Activated T-helper 1 cell treated with anti-CD3 and anti-CD28 coated beads, Interleukin-12 subunit alpha, Interleukin-12 subunit beta, Interleukin-2, Interleukin-4 antibody, amounts not matched to agents 30 ng/mL and 10 ng/mL and 1 ng/mL, durations not matched to agents 14 hours and 24 hours and 36 hours (primary cell): ENCODE measurements at regions of chr7 and their contacts with region 1.

Region 1: GRCh38 chr7:112939574-112940314 is 146.9 kb downstream of the GPR85 start:
- DNase-seq: peak; percentile 99
- H3K4me3 Mint-ChIP-seq: peak overlapping the region; percentile 91
- H3K27ac Mint-ChIP-seq: peak overlapping the region; percentile 95
- H3K4me1 Mint-ChIP-seq: peaks cover 39% of the 10 kb centered on the region
- H3K27me3 Mint-ChIP-seq: peaks cover 6% of the 10 kb centered on the region

Region 2: DNA sequence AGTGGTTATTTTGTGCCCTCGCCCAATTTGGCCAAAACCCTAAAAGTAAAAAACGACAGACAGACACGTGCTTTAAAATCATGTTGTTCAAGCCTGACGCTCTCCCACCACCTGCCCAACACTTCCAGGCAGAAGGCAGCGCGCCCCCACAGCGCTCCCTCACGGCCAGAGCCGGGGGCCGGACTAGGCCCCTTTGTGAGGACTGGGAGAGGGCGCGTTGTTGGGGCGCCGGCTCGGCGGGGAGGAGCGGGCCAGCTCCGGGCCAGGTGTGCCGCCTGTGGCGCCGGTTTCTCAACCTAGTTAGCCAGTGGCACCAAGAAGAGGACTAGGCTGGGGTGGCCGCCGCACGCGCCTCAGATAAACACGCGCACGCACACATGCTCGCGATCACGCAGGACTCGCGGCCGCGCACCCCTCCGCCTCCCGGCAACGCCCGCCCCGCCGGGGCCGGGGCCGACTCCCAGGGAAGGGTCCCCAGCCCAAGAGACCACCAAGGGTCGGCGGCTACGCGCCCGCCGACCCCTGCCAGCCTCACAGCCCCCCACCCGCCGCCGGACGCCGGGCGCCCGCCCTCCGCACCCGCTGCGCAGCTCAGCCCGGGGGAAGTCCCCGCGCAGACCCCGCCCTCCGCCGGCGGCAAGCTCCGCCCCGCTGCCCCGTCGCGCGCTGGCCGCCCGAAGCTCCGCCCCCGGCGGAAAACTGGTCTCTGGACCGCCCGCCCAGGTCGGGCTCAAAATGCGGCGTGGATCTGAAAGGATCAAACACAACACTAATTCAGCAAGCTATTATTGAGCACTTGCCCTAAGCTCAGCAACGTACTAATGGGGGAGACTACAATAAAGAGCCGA is 1377.6 kb before region 1 on chr7 and contains the start of gene IMMP2L:
- intact Hi-C with region 1: loop called (anchors 2 kb)
- DNase-seq: peak; percentile 89
- H3K4me3 Mint-ChIP-seq: peak within 1 kb of the TSS; percentile 87
- H3K27ac Mint-ChIP-seq: peak within 1 kb of the TSS; percentile 89
- H3K4me1 Mint-ChIP-seq: peaks cover 37% of the 10 kb centered on the region
- H3K27me3 Mint-ChIP-seq: no peaks in the 10 kb centered on the region
- total RNA-seq, gene IMMP2L: 11.3 and 16.0 TPM in 2 replicates

Region 3: GRCh38 chr7:113188396-113188795 is 248.7 kb after region 1 on chr7:
- intact Hi-C with region 1: no loop called
- DNase-seq: no peak
- H3K4me3 Mint-ChIP-seq: no peak overlapping the region
- H3K27ac Mint-ChIP-seq: no peak overlapping the region
- H3K4me1 Mint-ChIP-seq: no peaks in the 10 kb centered on the region
- H3K27me3 Mint-ChIP-seq: no peaks in the 10 kb centered on the region

Region 4: DNA sequence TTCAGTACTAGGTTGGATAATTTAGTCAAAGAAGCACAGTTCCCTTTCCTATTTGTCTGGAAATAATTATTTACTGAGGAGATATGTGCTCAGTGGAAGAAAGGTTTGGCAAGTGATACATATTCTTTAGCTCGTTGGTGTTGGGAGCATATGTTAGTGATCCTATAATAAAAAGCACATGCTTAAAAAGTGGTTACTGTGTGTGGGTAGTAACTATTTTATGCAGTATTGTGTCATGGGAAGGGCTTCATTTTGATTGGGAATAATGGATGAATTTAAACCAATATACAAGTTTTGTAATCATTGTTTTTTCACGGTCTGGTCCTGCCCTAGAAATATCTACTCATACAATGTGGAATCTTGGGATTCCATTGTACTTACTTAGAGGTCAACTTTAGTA is 1167.8 kb after region 1 on chr7:
- intact Hi-C with region 1: no loop called
- DNase-seq: no peak
- H3K4me3 Mint-ChIP-seq: no peak overlapping the region
- H3K27ac Mint-ChIP-seq: no peak overlapping the region
- H3K4me1 Mint-ChIP-seq: no peaks in the 10 kb centered on the region
- H3K27me3 Mint-ChIP-seq: peaks cover 4% of the 10 kb centered on the region